Activated CD4-positive, alpha-beta T cell treated with anti-CD3 and anti-CD28 coated beads for 36 hours (primary cell): ENCODE measurements at regions of chr7 and their contacts with region 1.

Region 1: GRCh38 chr7:43647673-43648472 is 65.0 kb downstream of the STK17A start:
- DNase-seq: peak; percentile 77
- ATAC-seq: peak; percentile 74
- H3K4me3 Mint-ChIP-seq: peak overlapping the region; percentile 66
- H3K27ac Mint-ChIP-seq: peak overlapping the region; percentile 98
- H3K4me1 Mint-ChIP-seq: peaks cover 95% of the 10 kb centered on the region
- H3K27me3 Mint-ChIP-seq: no peaks in the 10 kb centered on the region

Region 2: DNA sequence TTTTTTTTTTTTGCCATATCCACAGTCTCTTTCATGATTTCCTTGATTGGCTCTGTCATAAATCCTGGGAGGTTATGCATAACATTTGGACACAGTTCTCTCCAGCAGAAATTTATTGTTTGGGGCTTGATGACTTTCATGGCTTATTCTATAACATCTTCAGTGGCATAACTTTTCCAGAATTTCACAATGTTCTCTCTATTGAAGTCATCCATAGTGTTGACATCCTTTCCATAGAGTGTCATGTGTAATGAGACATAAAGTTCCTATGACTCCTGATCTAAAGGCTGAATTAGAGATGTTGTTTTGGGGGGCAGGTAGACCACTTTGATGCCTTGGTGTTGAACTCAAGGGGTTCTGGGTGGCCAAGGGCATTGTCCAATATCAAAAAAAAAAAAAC is 101.6 kb before region 1 on chr7:
- CTCF ChIA-PET with region 1: no interaction called
- POLR2A ChIA-PET with region 1: no interaction called
- intact Hi-C with region 1: no loop called
- DNase-seq: no peak
- ATAC-seq: no peak
- H3K4me3 Mint-ChIP-seq: no peak overlapping the region
- H3K27ac Mint-ChIP-seq: no peak overlapping the region
- H3K4me1 Mint-ChIP-seq: no peaks in the 10 kb centered on the region
- H3K27me3 Mint-ChIP-seq: peaks cover 7% of the 10 kb centered on the region

Region 3: GRCh38 chr7:43590862-43591550 is 56.9 kb before region 1 on chr7:
- CTCF ChIA-PET with region 1: interaction called, 18 read pairs
- POLR2A ChIA-PET with region 1: interaction called, 66 read pairs
- intact Hi-C with region 1: loop called (anchors 1 kb)
- DNase-seq: peak; percentile 70
- ATAC-seq: peak; percentile 63
- H3K4me3 Mint-ChIP-seq: peak overlapping the region; percentile 15
- H3K27ac Mint-ChIP-seq: peak overlapping the region; percentile 82
- H3K4me1 Mint-ChIP-seq: peaks cover 83% of the 10 kb centered on the region
- H3K27me3 Mint-ChIP-seq: no peaks in the 10 kb centered on the region

Region 4: GRCh38 chr7:43612599-43613589 is 35.0 kb before region 1 on chr7:
- CTCF ChIA-PET with region 1: interaction called, 6 read pairs
- POLR2A ChIA-PET with region 1: interaction called, 8 read pairs
- intact Hi-C with region 1: loop called (anchors 1 to 2 kb)
- DNase-seq: peak; percentile 33
- ATAC-seq: peak; percentile 86
- H3K4me3 Mint-ChIP-seq: peak overlapping the region; percentile 10
- H3K27ac Mint-ChIP-seq: peak overlapping the region; percentile 87
- H3K4me1 Mint-ChIP-seq: peaks cover 73% of the 10 kb centered on the region
- H3K27me3 Mint-ChIP-seq: no peaks in the 10 kb centered on the region

Region 5: DNA sequence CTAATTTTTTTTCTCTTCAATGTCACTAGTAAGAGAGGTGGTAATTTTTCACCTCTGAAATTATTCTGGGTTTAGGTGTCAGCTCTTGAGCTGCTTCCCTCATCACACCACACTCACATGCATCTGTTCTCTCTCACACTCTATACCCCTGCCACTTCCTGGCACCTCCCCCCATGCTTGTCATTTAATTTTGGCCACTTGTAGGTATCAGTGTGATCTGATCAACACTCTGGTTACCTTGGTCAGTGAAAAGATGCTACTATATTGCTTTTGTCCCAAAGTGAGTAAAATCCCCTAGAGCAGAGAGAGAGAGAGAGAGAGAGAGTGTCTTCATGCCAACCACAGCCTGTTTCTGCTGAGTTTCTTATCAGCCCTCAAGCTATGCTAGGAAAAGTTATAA is 22.4 kb before region 1 on chr7:
- CTCF ChIA-PET with region 1: interaction called, 16 read pairs
- POLR2A ChIA-PET with region 1: interaction called, 11 read pairs
- intact Hi-C with region 1: loop called (anchors 1 kb)
- DNase-seq: peak; percentile 60
- ATAC-seq: peak; percentile 62
- H3K4me3 Mint-ChIP-seq: peak overlapping the region; percentile 7
- H3K27ac Mint-ChIP-seq: peak overlapping the region; percentile 63
- H3K4me1 Mint-ChIP-seq: peaks cover 91% of the 10 kb centered on the region
- H3K27me3 Mint-ChIP-seq: no peaks in the 10 kb centered on the region

Region 6: DNA sequence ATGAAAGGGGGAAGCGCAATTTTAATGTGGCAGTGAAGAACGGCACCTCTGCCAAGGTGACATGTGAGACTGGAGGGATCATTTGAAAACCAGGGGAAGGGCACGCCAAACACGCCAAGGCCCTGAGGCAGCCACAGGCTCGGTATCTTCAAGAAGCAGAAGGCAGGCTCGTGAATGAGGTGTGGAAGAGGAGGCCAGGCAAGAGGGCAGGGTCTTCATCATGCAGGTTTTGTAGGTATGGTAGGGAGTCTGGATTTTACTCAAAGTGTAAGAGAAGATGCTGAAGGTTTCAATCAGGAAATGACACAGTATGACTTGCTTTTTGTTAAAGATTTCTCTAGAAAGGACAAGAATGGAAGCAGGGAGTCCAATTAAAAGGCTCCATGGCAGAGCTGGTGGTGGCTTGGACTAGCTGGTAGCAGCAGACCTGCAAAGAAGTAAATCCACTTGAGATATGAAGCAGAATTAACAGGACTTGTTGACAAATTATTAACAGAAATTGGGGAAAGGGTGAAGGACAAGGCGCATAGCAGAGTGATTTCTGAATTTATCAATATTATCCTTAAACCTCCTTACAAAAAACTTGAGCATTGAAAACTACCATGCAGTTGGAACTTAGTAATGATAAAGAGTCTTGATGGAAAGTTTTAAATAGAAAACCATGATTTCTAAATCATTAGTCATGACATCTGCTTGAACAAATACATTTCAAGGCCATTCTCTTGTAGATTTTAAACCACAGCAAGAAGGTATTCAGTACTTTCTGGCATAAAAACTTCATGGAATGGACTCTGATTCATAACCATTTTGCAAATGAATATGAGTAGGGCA is 11.1 kb after region 1 on chr7:
- CTCF ChIA-PET with region 1: interaction called, 16 read pairs
- POLR2A ChIA-PET with region 1: interaction called, 3 read pairs
- intact Hi-C with region 1: loop called (anchors 1 kb)
- DNase-seq: peak; percentile 73
- ATAC-seq: peak; percentile 98
- H3K4me3 Mint-ChIP-seq: peak overlapping the region; percentile 34
- H3K27ac Mint-ChIP-seq: peak overlapping the region; percentile 96
- H3K4me1 Mint-ChIP-seq: peaks cover 70% of the 10 kb centered on the region
- H3K27me3 Mint-ChIP-seq: no peaks in the 10 kb centered on the region

Region 7: DNA sequence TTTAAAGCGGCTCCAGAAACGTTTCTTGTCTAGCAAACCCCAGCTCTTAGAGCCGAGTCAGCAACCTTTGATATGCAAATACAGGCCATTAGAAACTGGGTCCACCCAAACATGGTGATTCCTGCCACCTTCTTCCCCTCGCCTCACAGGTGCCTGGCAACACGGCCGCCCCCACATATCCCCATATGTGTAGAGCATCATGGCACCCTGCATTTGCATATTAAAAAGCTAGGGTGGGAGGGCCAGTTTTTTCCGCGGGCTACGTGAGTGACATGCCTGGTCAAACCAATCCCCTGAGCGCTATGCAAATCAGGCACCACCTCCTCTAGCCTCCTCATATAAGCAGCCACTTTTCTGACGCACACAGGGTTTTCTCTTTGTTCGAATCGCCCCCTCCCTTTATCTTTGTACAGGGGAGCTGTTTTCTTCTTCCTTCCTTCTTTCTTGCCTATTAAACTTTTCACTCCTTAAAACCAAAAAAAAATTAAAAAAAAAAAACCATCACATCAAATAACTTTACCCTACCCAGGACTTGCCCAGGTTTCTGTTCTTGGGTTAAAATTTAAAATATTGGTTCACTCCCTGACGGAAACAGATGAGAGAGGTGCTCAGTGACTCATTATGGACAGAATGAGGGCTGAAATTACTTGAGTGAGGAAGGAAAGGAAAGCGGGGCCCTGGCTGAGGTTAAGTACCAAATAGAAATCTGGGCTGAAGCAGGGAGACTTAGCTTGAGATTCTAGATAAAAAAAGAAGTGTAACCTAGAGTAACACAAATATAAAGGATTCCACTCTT is 21.6 kb after region 1 on chr7:
- CTCF ChIA-PET with region 1: interaction called, 16 read pairs
- POLR2A ChIA-PET with region 1: interaction called, 10 read pairs
- intact Hi-C with region 1: loop called (anchors 1 to 2 kb)
- DNase-seq: peak; percentile 93
- ATAC-seq: peak; percentile 85
- H3K4me3 Mint-ChIP-seq: peak overlapping the region; percentile 68
- H3K27ac Mint-ChIP-seq: peak overlapping the region; percentile 94
- H3K4me1 Mint-ChIP-seq: peaks cover 84% of the 10 kb centered on the region
- H3K27me3 Mint-ChIP-seq: no peaks in the 10 kb centered on the region

Region 8: DNA sequence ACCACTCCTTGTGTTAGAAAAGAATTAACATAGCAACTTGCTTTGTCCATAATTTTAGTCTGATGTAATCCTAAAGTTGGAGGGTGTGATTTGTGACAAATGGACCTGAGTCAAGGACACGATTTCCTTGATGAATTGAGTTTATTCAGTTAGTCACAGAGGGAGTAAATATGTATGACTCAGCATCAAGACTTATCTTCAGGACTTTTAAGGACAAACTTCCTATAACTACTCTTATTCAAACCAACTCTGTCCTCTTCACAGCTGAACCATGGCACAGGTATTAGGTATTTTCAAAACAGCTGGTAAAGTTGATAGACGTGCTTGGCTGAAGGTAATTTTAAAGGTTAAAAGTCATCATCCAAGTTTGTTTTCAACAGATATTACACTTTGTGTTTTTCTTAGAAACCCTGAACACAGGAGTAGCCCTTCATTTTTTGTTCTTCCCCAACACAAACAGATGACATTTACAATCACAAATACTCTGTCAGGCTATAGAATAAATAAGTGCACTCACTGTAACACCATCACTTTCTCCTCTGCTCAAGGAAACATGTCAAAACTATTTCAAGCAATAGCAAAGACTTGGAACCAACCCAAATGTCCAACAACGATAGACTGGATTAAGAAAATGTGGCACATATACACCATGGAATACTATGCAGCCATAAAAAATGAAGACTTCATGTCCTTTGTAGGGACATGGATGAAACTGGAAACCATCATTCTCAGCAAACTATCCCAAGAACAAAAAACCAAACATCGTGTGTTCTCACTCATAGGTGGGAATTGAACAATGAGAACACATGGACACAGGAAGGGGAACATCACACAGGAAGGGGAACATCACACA is 26.9 kb after region 1 on chr7:
- CTCF ChIA-PET with region 1: interaction called, 12 read pairs
- POLR2A ChIA-PET with region 1: interaction called, 10 read pairs
- intact Hi-C with region 1: loop called (anchors 1 kb)
- DNase-seq: no peak
- ATAC-seq: no peak
- H3K4me3 Mint-ChIP-seq: no peak overlapping the region
- H3K27ac Mint-ChIP-seq: peak overlapping the region; percentile 65
- H3K4me1 Mint-ChIP-seq: peaks cover 80% of the 10 kb centered on the region
- H3K27me3 Mint-ChIP-seq: no peaks in the 10 kb centered on the region